PC-9 (cell line): ENCODE measurements at regions of chr5 and their contacts with region 1.

Region 1: GRCh38 chr5:173984218-173984617 is 4.8 kb upstream of the C5orf47 start:
- DNase-seq: peak in 1 of 2 experiments; percentile 53
- H3K4me3 ChIP-seq: no peak overlapping the region
- H3K27ac ChIP-seq: no peak overlapping the region
- H3K4me1 ChIP-seq: no peaks in the 10 kb centered on the region
- H3K27me3 ChIP-seq: no peaks in the 10 kb centered on the region
- CTCF ChIP-seq: peak; percentile 68

Region 2: GRCh38 chr5:172707285-172708182 is 1276.7 kb before region 1 on chr5:
- CTCF ChIA-PET with region 1: no interaction called
- POLR2A ChIA-PET with region 1: no interaction called
- intact Hi-C with region 1: loop called (anchors 5 kb)
- DNase-seq: peak in 1 of 2 experiments; percentile 69
- H3K4me3 ChIP-seq: no peak overlapping the region
- H3K27ac ChIP-seq: no peak overlapping the region
- H3K4me1 ChIP-seq: no peaks in the 10 kb centered on the region; the same call in 1 of the 2 replicates
- H3K27me3 ChIP-seq: no peaks in the 10 kb centered on the region
- CTCF ChIP-seq: peak; percentile 74

Region 3: GRCh38 chr5:173293817-173294672 is 690.2 kb before region 1 on chr5:
- CTCF ChIA-PET with region 1: no interaction called
- POLR2A ChIA-PET with region 1: no interaction called
- intact Hi-C with region 1: loop called (anchors 2 kb)
- DNase-seq: peak; percentile 71 to 83
- H3K4me3 ChIP-seq: peak overlapping the region; percentile 45; the same call in 1 of the 2 replicates
- H3K27ac ChIP-seq: peak overlapping the region; percentile 28
- H3K4me1 ChIP-seq: peaks cover 26% of the 10 kb centered on the region
- H3K27me3 ChIP-seq: no peaks in the 10 kb centered on the region
- CTCF ChIP-seq: peak; percentile 92

Region 4: GRCh38 chr5:173925448-173926071 is 58.7 kb before region 1 on chr5:
- CTCF ChIA-PET with region 1: no interaction called
- POLR2A ChIA-PET with region 1: no interaction called
- intact Hi-C with region 1: no loop called
- DNase-seq: peak in 1 of 2 experiments; percentile 47
- H3K4me3 ChIP-seq: no peak overlapping the region
- H3K27ac ChIP-seq: no peak overlapping the region
- H3K4me1 ChIP-seq: peaks cover 7% of the 10 kb centered on the region
- H3K27me3 ChIP-seq: no peaks in the 10 kb centered on the region
- CTCF ChIP-seq: peak; percentile 68

Region 5: GRCh38 chr5:174003795-174004194 is 19.6 kb after region 1 on chr5:
- CTCF ChIA-PET with region 1: no interaction called
- POLR2A ChIA-PET with region 1: no interaction called
- intact Hi-C with region 1: no loop called
- DNase-seq: no peak
- H3K4me3 ChIP-seq: no peak overlapping the region
- H3K27ac ChIP-seq: no peak overlapping the region
- H3K4me1 ChIP-seq: no peaks in the 10 kb centered on the region; the same call in 1 of the 2 replicates
- H3K27me3 ChIP-seq: peaks cover 43% of the 10 kb centered on the region
- CTCF ChIP-seq: no peak

Region 6: DNA sequence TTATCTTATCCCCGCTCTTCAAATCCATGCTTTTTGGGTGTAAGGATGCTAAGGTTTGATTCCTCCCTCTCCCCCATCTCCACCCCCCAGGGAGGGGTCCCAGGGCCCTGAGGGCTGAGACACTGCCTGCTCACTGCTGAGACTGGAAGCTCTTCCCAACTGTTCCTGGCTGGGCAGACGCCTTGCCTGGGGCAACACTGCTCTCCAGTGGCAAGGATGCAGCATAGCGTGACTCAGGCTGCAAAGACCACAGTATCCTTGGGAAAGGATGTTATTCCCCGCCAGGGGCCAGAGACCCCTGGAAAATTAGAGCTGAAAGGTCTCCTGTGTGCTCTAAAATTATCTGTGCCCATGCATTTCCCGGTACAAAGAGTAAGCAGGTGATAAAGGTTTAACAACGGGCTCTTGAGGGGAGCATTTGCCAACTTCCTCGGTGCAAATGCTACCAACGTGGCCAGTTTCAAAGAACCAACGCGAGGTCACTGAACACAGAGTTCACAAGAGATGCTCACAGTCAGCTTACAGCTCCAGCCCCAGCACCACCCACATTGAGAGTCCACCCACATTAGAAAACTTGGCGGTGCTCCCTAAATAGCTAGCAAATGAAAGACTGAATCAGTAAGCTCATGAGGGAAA is 333.2 kb after region 1 on chr5:
- CTCF ChIA-PET with region 1: no interaction called
- POLR2A ChIA-PET with region 1: no interaction called
- intact Hi-C with region 1: loop called (anchors 5 kb)
- DNase-seq: peak in 1 of 2 experiments; percentile 48
- H3K4me3 ChIP-seq: no peak overlapping the region
- H3K27ac ChIP-seq: no peak overlapping the region
- H3K4me1 ChIP-seq: no peaks in the 10 kb centered on the region
- H3K27me3 ChIP-seq: peaks cover 77% of the 10 kb centered on the region
- CTCF ChIP-seq: peak; percentile 78